ENCODE measurements at regions of chr7 and their contacts with region 1.

Region 1: GRCh38 chr7:7761340-7761980 is 43.1 kb upstream of the RPA3 start:
- DNase-seq: peak; percentile 55
- H3K4me3 ChIP-seq: no peak overlapping the region
- H3K27ac ChIP-seq: no peak overlapping the region
- H3K4me1 ChIP-seq: no peaks in the 10 kb centered on the region
- H3K27me3 ChIP-seq: no peaks in the 10 kb centered on the region
- CTCF ChIP-seq: peak; percentile 50

Region 2: DNA sequence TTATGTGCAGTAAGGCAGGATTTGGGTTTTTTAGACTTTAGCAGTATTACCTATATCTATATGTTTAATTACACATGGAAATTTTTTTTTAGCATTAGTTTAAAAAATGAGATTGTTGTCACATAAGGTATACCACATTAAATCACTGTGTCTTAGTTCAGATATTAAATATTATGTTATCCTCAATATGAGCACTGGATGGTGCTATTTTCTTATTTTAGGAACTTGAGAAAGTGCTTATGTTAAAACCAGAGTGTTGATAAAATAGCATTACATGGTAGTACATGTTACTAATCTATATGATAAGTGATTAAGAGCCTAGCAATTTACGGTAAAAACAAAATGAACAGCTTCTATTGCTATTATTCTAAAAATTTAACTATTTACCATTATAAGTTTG is 166.0 kb before region 1 on chr7:
- CTCF ChIA-PET with region 1: no interaction called
- POLR2A ChIA-PET with region 1: no interaction called
- intact Hi-C with region 1: loop called (anchors 10 kb)
- DNase-seq: peak; percentile 49
- H3K4me3 ChIP-seq: no peak overlapping the region
- H3K27ac ChIP-seq: no peak overlapping the region
- H3K4me1 ChIP-seq: no peaks in the 10 kb centered on the region
- H3K27me3 ChIP-seq: no peaks in the 10 kb centered on the region
- CTCF ChIP-seq: peak; percentile 56

Measured in A673 (cell line).